Activated B cell treated with CpG ODN at 0.5 μM for 24 hours (primary cell): ENCODE measurements at regions of chr6 and their contacts with region 1.

Region 1: DNA sequence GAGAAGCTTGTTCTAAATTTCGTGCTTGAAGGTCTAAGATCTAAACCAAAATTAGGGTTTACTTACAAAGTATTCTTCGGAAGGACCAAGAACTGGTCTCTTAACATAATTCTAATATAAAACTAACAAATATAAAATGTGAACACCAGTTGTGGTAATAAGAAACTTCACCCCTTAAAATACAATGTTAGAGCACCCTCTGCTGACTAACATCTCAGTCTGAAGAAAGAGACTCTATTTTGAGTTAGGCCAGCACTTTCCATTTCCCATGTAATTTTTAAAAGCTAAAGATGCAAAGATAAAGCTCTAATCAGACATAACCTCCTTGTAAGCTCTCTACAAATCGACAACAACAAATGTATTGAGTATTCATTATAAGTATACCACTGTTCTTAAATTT is 24.6 kb downstream of the ATG5 start:
- DNase-seq: no peak
- ATAC-seq: no peak
- H3K4me3 Mint-ChIP-seq: no peak overlapping the region
- H3K27ac Mint-ChIP-seq: no peak overlapping the region
- H3K4me1 Mint-ChIP-seq: no peaks in the 10 kb centered on the region
- H3K27me3 Mint-ChIP-seq: no peaks in the 10 kb centered on the region
- CTCF ChIP-seq: no peak

Region 2: GRCh38 chr6:105087571-105088211 is 1213.3 kb before region 1 on chr6:
- CTCF ChIA-PET with region 1: no interaction called
- POLR2A ChIA-PET with region 1: no interaction called
- intact Hi-C with region 1: loop called (anchors 2 kb)
- DNase-seq: no peak
- ATAC-seq: no peak
- H3K4me3 Mint-ChIP-seq: no peak overlapping the region
- H3K27ac Mint-ChIP-seq: no peak overlapping the region
- H3K4me1 Mint-ChIP-seq: no peaks in the 10 kb centered on the region
- H3K27me3 Mint-ChIP-seq: no peaks in the 10 kb centered on the region
- CTCF ChIP-seq: no peak

Region 3: DNA sequence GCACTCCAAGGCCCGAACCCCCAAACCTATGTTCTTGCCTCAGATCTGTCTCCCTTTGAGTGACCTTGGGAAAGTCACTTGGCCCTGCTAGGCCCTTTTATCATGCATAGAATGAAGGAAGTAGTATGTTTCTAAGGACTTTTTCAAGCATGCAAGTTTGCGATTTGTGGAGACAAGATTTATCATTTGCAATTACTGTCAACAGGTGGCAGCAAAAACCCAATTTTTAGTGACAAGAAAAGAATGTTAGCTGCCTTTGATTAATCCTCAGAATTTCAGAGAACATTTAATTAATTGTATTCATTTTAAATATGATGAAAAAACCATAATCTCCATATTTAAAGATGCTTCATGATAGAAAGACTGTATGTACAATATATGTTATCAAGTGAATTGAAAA is 869.7 kb before region 1 on chr6:
- CTCF ChIA-PET with region 1: interaction called, 11 read pairs
- POLR2A ChIA-PET with region 1: no interaction called
- intact Hi-C with region 1: loop called (anchors 1 kb)
- DNase-seq: no peak
- ATAC-seq: no peak
- H3K4me3 Mint-ChIP-seq: no peak overlapping the region
- H3K27ac Mint-ChIP-seq: no peak overlapping the region
- H3K4me1 Mint-ChIP-seq: no peaks in the 10 kb centered on the region
- H3K27me3 Mint-ChIP-seq: peaks cover 8% of the 10 kb centered on the region
- CTCF ChIP-seq: no peak

Region 4: DNA sequence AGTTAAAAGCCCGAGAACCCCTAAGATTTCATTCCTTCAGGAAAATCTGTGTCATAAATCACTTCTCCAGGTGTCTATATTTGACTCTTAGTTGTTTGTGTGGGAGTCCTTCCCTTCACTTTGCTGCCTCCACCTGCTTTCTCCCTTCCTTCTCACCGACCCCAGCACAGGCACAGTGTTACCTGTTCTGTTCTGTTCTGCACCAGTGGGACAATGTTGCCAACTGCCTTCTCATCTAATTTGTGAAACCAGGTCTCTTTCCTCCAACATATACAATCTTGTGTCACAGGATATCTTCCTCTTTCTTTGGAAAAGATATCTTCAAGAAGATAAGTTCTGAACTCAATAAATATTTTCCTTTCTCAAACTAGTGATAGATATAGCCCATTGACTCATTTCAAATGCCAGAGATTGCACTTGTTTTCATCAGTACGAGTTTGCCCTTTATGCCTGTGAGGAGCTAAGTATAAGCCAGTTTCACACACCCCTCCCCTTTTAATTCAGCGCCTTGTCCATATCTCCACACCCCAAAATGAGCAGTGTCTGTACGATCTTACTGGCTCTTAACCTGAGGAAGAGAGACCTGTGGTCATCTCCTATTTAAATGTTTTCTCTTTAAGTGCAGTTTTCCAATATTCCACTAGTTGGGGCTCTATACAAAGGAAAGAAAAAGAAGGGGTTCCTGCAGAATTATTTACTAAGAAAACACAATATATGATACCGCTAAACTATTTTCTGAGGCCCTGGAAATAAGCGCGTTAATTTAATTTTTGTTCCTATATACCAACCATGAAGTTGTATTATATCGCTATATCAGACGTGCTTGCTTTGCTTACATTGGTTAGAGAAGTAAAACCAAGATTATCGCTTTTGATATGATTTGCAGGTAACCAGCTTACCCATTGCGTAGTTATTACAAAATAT is 816.4 kb before region 1 on chr6:
- CTCF ChIA-PET with region 1: no interaction called
- POLR2A ChIA-PET with region 1: no interaction called
- intact Hi-C with region 1: loop called (anchors 1 kb)
- DNase-seq: no peak
- ATAC-seq: no peak
- H3K4me3 Mint-ChIP-seq: no peak overlapping the region
- H3K27ac Mint-ChIP-seq: no peak overlapping the region
- H3K4me1 Mint-ChIP-seq: peaks cover 2% of the 10 kb centered on the region
- H3K27me3 Mint-ChIP-seq: peaks cover 6% of the 10 kb centered on the region
- CTCF ChIP-seq: no peak

Region 5: GRCh38 chr6:105733565-105734162 is 567.3 kb before region 1 on chr6:
- CTCF ChIA-PET with region 1: interaction called, 3 read pairs
- POLR2A ChIA-PET with region 1: no interaction called
- intact Hi-C with region 1: loop called (anchors 1 kb)
- DNase-seq: no peak
- ATAC-seq: no peak
- H3K4me3 Mint-ChIP-seq: no peak overlapping the region
- H3K27ac Mint-ChIP-seq: no peak overlapping the region
- H3K4me1 Mint-ChIP-seq: no peaks in the 10 kb centered on the region
- H3K27me3 Mint-ChIP-seq: no peaks in the 10 kb centered on the region
- CTCF ChIP-seq: peak; percentile 39

Region 6: GRCh38 chr6:105793130-105793529 is 507.8 kb before region 1 on chr6:
- CTCF ChIA-PET with region 1: no interaction called
- POLR2A ChIA-PET with region 1: no interaction called
- intact Hi-C with region 1: loop called (anchors 10 kb)
- DNase-seq: no peak
- ATAC-seq: peak; percentile 88
- H3K4me3 Mint-ChIP-seq: no peak overlapping the region
- H3K27ac Mint-ChIP-seq: no peak overlapping the region
- H3K4me1 Mint-ChIP-seq: peaks cover 20% of the 10 kb centered on the region
- H3K27me3 Mint-ChIP-seq: no peaks in the 10 kb centered on the region
- CTCF ChIP-seq: no peak

Region 7: DNA sequence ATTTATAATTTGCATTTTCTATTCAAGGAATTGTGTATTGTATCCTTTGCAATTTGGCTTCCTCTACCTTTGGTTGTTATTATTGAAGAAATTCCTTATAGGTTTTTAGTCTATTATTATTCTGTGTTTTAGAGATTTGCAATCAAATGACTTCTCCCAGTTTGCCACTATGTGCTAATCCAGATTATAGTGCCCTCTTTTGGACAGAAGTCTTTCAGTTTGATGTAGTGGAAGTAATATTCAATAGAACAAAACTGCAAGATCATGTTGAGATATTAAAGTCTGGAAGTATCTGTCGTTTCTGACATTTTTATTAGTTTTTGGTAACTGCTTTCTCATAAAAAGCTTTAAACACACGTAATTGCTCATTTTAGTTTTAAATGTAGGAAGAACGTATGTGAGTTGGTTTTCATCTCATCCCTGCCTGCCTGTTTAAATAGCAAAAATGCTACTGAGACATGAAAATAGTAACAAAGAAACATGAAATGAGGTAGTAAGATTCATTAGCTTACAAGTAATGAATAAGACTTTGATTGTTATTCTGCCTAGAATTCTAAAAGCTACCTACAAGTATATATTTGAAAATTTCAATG is 255.5 kb after region 1 on chr6:
- CTCF ChIA-PET with region 1: no interaction called
- POLR2A ChIA-PET with region 1: no interaction called
- intact Hi-C with region 1: no loop called
- DNase-seq: no peak
- ATAC-seq: peak; percentile 31
- H3K4me3 Mint-ChIP-seq: no peak overlapping the region
- H3K27ac Mint-ChIP-seq: peak overlapping the region; percentile 13
- H3K4me1 Mint-ChIP-seq: peaks cover 22% of the 10 kb centered on the region
- H3K27me3 Mint-ChIP-seq: no peaks in the 10 kb centered on the region
- CTCF ChIP-seq: no peak